ENCODE measurements at regions of chr9 and their contacts with region 1.

Region 1: GRCh38 chr9:107737987-107738743 is 248.6 kb upstream of the KLF4 start:
- DNase-seq: no peak
- H3K4me3 ChIP-seq: no peak overlapping the region
- H3K27ac ChIP-seq: peak overlapping the region; percentile 83
- H3K4me1 ChIP-seq: peaks cover 68% of the 10 kb centered on the region
- H3K27me3 ChIP-seq: no peaks in the 10 kb centered on the region
- CTCF ChIP-seq: no peak
- POLR2A ChIP-seq: no peak

Region 2: GRCh38 chr9:107637421-107638420 is 100.4 kb before region 1 on chr9:
- intact Hi-C with region 1: loop called (anchors 5 kb)
- DNase-seq: peak in 1 of 2 donors; percentile 97
- H3K4me3 ChIP-seq: peak overlapping the region; percentile 40 to 41
- H3K27ac ChIP-seq: peak overlapping the region; percentile 96
- H3K4me1 ChIP-seq: peaks cover 17% of the 10 kb centered on the region
- H3K27me3 ChIP-seq: no peaks in the 10 kb centered on the region
- CTCF ChIP-seq: peak in 1 of 3 experiments; percentile 6
- POLR2A ChIP-seq: peak in 1 of 2 donors; percentile 97

Measured in vagina (tissue), 2 donors.